H1 (cell line): ENCODE measurements at regions of chr15 and their contacts with region 1.

Region 1: GRCh38 chr15:65377104-65377975 is 462 bp downstream of the IGDCC3 start:
- DNase-seq: peak in 1 of 2 experiments; percentile 83
- H3K4me3 ChIP-seq: peak overlapping the region; percentile 58 to 89 (median 80)
- H3K27ac ChIP-seq: no peak overlapping the region
- H3K4me1 ChIP-seq: peaks cover 8 to 25% (median 14%) of the 10 kb centered on the region in 4 experiments
- H3K27me3 ChIP-seq: peaks cover 0 to 20% (median 10%) of the 10 kb centered on the region in 4 experiments; a peak in 5 of 7 replicates
- CTCF ChIP-seq: no peak
- EP300 ChIP-seq: no peak
- POLR2A ChIP-seq: no peak; a peak in 1 of 3 replicates
- RAD21 ChIP-seq: no peak

Region 2: DNA sequence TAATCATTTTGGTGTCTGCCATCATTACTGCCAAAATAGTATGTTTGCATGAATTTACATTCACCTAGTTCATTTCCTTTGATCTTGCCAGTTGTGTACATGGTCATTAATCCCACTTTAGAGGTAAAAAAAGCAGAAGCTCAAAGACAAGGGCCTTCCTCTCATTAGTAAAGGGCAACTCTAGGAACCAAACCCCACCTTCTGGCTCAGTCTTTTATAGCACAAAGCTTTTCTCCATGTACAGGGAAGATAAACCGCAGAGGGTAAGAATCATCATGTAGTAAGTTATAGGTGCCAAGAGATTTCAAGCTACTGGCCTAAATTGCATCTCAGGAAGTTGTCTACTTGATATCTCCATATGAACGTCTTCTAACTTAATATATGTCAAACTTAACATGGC is 368.4 kb before region 1 on chr15:
- CTCF ChIA-PET with region 1: no interaction called
- POLR2A ChIA-PET with region 1: no interaction called
- DNase-seq: no peak
- H3K4me3 ChIP-seq: no peak overlapping the region
- H3K27ac ChIP-seq: no peak overlapping the region
- H3K4me1 ChIP-seq: 0 out of 7 replicates have a peak, but pooled peaks cover 0 to 3% (median 0%) of the 10 kb centered on the region in 4 experiments
- H3K27me3 ChIP-seq: no peaks in the 10 kb centered on the region
- CTCF ChIP-seq: peak in 2 of 3 experiments; percentile 29 to 39; a peak in 2 of 4 replicates
- EP300 ChIP-seq: no peak
- POLR2A ChIP-seq: no peak
- RAD21 ChIP-seq: peak; percentile 41 to 55

Region 3: DNA sequence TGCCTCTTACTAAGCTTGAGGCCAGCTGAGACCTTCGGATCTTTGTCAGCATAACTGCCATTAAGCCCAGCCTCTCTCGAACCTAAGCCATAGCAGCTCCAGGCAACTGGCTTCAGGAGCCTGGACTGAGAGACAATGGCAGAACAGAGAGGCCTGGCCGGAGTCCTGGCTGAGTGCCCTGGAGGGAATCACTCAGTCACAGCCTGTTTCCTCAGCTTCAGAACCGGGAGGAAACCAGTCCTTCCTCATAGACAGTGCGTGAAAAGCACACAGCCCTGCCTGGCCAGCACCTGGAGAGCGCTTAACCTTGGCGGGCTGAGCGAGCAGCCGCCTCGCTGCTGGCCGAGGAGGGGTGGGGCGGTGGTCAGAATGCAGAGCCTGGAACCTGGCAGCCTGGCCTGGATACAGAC is 51.2 kb before region 1 on chr15:
- CTCF ChIA-PET with region 1: interaction called, 547 read pairs
- POLR2A ChIA-PET with region 1: interaction called, 57 read pairs
- DNase-seq: no peak
- H3K4me3 ChIP-seq: no peak overlapping the region
- H3K27ac ChIP-seq: no peak overlapping the region
- H3K4me1 ChIP-seq: peaks cover 0 to 7% (median 1%) of the 10 kb centered on the region in 4 experiments; a peak in 4 of 7 replicates
- H3K27me3 ChIP-seq: 0 out of 7 replicates have a peak, but pooled peaks cover 0 to 3% (median 0%) of the 10 kb centered on the region in 4 experiments
- CTCF ChIP-seq: no peak
- EP300 ChIP-seq: no peak
- POLR2A ChIP-seq: no peak
- RAD21 ChIP-seq: no peak

Region 4: GRCh38 chr15:65361708-65362459 is 15.5 kb before region 1 on chr15:
- CTCF ChIA-PET with region 1: interaction called, 92 read pairs
- POLR2A ChIA-PET with region 1: interaction called, 59 read pairs
- DNase-seq: peak in 1 of 2 experiments; percentile 66
- H3K4me3 ChIP-seq: peak overlapping the region in 1 of 4 experiments; percentile 0; a peak in 1 of 8 replicates
- H3K27ac ChIP-seq: no peak overlapping the region
- H3K4me1 ChIP-seq: peaks cover 18 to 35% (median 26%) of the 10 kb centered on the region in 4 experiments
- H3K27me3 ChIP-seq: peaks cover 0 to 13% (median 6%) of the 10 kb centered on the region in 4 experiments; a peak in 5 of 7 replicates
- CTCF ChIP-seq: no peak
- EP300 ChIP-seq: no peak
- POLR2A ChIP-seq: no peak
- RAD21 ChIP-seq: no peak